GM12878 (cell line): ENCODE measurements at regions of chr4 and their contacts with region 1.

Region 1: DNA sequence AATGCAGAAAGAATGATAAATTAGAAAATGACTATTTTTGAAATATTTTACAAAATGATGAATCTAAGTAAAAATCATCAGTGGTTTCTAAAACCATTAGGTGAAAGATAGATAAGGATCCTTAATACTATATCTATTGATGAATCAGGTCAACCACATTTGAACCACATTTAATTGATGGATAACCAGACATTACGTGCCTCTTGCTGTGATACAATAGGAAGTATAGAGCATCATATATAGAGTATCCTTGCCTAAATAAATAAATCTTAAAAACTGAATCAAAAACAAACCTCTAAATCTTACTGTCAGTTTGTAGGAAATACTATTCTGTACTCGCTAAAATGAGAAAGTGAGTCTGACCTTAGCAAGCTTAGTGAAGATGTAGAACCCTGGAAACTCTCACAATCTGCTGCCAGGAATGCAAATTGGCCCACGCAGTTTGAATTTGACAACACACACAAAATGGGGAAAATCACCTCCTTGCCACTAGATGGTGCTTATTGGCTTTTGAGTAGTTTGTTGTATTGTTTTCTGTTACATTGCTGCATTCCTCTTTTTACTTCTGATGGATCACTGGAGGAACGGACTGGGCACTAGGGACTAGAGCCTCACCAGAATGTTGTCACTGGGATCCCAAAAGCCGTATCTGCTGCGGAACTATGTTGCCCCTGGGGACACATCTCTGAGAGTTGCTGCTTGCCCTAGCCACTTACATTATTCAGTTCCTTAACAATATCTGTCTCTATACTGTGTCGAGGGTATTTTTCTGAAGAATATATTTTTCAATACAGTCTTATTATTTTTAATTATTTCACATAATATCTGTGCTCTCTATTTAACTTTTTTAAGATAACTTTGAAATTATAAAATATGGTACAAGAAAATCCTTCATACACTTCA is 25.4 kb upstream of the SLAIN2 start:
- DNase-seq: no peak
- ATAC-seq: peak; percentile 89
- H3K4me3 ChIP-seq: no peak overlapping the region
- H3K27ac ChIP-seq: no peak overlapping the region
- H3K4me1 ChIP-seq: no peaks in the 10 kb centered on the region
- H3K27me3 ChIP-seq: no peaks in the 10 kb centered on the region
- CTCF ChIP-seq: peak; percentile 66 to 79 (median 70); a peak in 5 of 6 replicates
- EP300 ChIP-seq: no peak
- POLR2A ChIP-seq: no peak
- RAD21 ChIP-seq: peak; percentile 72

Region 2: DNA sequence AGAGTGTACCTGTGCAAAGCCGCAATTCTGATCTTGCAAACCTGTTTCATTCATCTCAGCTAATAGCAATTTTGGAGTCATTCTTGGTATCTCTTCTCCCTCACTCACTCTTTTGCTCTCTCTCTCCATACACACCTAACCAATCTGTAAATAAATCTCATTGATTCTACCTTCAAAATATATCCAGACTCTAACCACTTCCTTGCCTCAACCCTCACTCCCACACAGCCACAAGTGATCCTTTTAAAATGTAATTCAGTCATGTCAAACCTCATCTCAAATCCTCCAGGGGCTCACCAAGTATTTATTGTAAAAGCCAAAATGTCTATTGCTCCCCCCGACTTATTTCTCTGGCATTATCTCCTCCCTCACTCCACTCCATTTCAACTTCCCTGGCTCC is 115.4 kb after region 1 on chr4:
- CTCF ChIA-PET with region 1: no interaction called
- POLR2A ChIA-PET with region 1: no interaction called
- RAD21 ChIA-PET with region 1: no interaction called
- SMC1A ChIA-PET with region 1: no interaction called
- in situ Hi-C with region 1: no loop called
- intact Hi-C with region 1: loop called (anchors 5 kb)
- DNase-seq: no peak
- ATAC-seq: no peak
- H3K4me3 ChIP-seq: no peak overlapping the region
- H3K27ac ChIP-seq: no peak overlapping the region
- H3K4me1 ChIP-seq: peaks cover 3% of the 10 kb centered on the region; the same call in 1 of the 2 replicates
- H3K27me3 ChIP-seq: no peaks in the 10 kb centered on the region
- CTCF ChIP-seq: no peak
- EP300 ChIP-seq: no peak
- POLR2A ChIP-seq: no peak
- RAD21 ChIP-seq: no peak